Activated CD8-positive, alpha-beta T cell treated with anti-CD3 and anti-CD28 coated beads, Interleukin-2, amount 10 ng/mL, durations not matched to agents 7 days and 5 days (primary cell): ENCODE measurements at regions of chr5 and their contacts with region 1.

Region 1: DNA sequence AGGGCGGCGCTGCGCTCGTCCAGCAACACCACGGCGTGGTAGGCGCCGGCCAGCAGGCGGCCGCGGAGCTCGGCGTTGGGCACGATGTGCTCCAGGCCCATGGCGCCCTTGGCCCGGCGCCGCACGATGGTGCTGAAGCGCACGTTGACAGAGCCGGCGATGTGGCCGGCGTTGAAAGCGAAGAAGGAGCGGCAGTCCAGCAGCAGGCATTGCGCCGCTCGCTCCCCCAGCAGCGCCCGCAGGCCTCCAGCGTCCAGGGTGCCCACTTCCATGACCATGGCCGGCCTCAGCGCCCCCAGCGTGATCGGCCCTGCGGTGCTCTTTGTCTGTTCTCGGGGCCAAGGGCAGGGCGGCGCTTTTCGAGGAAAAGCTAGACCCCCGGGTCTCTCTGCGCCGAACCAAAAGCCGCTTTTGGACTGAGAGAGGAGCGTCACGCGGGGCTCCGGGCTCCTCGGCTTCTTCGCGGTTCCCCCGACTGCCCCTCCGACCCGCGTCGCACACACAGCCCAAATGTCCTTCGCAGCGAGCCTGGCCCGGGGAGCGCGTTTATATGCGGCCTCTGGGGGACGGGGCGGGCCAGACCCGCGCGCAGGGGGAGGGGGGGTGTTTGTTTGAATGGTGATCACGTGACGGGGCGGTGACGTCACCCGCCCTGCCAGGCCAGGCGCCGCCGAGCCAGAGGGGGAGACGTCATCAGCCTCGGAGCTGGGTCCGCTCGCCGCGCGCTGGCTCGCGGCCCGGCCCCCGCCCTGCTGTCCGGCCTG is at the start of gene DUSP1:
- DNase-seq: peak; percentile 98
- ATAC-seq: peak; percentile 68
- H3K4me3 Mint-ChIP-seq: peak within 1 kb of the TSS; percentile 90
- H3K27ac Mint-ChIP-seq: peak within 1 kb of the TSS; percentile 99
- H3K4me1 Mint-ChIP-seq: peaks cover 53% of the 10 kb centered on the region
- H3K27me3 Mint-ChIP-seq: no peaks in the 10 kb centered on the region
- total RNA-seq, gene DUSP1: 55.6 to 56.6 TPM

Region 2: DNA sequence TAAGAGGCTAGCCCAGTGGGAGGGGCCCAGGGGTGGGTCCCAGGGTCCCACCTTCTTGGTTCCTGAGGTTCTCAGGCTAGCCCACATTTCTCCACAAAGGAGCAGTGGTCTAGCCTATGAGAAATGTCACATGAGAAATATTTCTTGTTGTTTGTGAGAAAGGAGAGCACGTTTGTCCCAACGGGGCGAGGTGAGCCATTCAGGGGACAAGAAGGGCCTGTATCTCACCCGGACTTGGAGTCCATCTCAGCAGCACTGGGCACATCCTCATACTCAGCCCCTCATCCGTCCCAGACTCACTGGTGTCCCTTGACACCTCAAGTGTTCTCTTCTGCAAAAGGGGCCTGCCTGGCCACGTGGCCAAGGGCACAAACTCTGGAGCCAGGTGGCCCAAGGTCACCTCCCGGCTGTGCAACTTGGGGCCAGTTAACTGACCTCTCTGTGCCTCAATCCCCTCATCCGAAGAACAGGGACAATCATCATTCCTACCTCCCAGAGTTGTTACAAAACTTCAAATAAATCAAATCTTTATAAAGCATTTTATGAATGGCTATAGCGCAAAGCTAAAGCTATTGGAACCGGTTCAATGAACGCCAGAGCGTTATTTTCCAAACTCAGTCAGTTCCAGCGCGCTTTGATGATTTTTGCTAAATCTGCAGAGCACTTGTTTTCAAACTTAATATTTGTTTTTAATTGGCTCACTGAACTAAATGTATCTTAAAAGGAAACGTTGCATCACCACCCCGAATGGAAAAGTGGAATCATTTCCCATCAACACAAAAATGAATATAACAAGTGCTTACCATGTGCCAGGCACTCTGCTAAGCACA is 49.3 kb before region 1 on chr5:
- CTCF ChIA-PET with region 1: interaction called, 24 read pairs
- POLR2A ChIA-PET with region 1: interaction called, 8 read pairs
- DNase-seq: no peak
- ATAC-seq: no peak
- H3K4me3 Mint-ChIP-seq: no peak overlapping the region
- H3K27ac Mint-ChIP-seq: no peak overlapping the region
- H3K4me1 Mint-ChIP-seq: peaks cover 15% of the 10 kb centered on the region
- H3K27me3 Mint-ChIP-seq: peaks cover 2% of the 10 kb centered on the region

Region 3: DNA sequence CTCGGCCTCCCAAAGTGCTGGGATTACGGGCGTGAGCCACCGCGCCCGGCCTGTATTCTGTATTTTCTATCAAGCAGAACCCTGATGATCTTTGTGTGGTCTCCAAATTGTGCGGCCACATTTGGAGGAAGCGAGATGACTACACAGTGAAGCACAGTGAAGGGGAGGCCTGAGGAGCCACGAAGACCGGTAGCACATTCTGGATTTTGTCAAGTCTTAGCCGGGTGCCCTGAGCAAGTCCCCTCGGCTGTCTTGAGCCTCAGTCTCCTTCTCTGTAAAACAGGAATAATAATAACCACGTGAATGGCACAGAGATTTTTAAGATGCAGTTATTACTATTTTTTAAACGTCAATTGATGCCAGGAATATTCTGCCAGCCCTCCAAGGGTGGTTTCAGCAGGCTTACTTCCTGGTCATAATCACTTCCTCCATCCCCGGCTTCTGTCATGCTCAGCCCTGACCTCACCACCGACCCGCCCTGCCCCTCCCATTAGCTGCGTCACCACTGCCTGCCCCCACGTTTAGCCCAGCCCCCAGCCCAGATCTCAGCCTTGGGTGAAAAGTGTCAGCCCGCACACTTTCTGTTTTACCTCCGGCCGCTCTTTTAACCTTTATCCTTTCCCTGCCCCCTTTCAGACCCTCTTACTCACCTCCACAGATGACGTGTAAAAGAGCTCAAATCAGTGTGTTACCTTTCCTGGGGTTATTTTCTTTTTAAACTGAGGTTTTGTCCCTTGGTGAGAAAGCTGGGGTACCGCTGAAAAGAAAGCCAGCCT is 36.2 kb after region 1 on chr5:
- CTCF ChIA-PET with region 1: interaction called, 10 read pairs
- POLR2A ChIA-PET with region 1: interaction called, 17 read pairs
- DNase-seq: peak; percentile 94
- ATAC-seq: peak; percentile 96
- H3K4me3 Mint-ChIP-seq: peak overlapping the region; percentile 66
- H3K27ac Mint-ChIP-seq: peak overlapping the region; percentile 88
- H3K4me1 Mint-ChIP-seq: peaks cover 18% of the 10 kb centered on the region
- H3K27me3 Mint-ChIP-seq: no peaks in the 10 kb centered on the region

Region 4: DNA sequence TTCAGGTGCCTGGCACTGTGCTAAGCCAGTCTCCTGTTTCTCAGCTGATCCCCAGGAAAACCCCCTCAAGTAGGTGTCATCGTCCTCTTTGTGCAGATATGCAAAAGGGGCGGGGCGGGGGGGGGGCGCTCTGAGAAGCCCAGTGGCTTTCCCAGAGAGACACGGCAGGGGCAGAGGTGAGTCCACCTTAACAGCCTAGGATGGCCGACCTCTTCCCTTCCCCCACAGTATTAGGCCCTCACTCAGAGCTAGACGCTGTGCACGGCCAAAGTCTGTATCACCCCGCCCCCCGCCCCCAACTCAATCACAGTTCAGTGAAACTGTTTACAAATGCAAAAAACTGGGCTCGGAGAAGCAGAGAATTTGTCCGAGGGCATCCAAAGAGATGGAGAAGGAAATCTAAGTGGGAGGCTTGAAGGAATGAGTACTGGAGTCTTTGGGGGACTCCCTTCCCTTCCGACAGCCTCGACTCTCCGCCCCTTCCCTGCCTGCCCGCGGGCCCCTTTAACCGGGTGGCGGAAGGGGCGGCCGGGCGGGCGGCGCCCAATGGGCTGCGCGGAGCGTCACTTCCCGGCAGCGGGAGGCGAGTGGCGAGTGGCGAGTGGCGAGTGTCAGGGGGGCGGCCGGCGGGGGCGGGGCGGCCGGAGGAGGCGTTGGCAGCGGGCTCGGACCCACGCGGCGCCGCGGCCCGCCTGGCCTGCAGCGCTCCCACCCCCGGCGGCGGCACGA is 63.0 kb after region 1 on chr5 and contains the start of gene ERGIC1:
- CTCF ChIA-PET with region 1: interaction called, 25 read pairs
- POLR2A ChIA-PET with region 1: interaction called, 25 read pairs
- DNase-seq: peak; percentile 79
- ATAC-seq: peak; percentile 93
- H3K4me3 Mint-ChIP-seq: peak within 1 kb of the TSS; percentile 79
- H3K27ac Mint-ChIP-seq: peak within 1 kb of the TSS; percentile 75
- H3K4me1 Mint-ChIP-seq: peaks cover 42% of the 10 kb centered on the region
- H3K27me3 Mint-ChIP-seq: no peaks in the 10 kb centered on the region
- total RNA-seq, gene ERGIC1: 50.4 to 52.7 TPM

Region 5: DNA sequence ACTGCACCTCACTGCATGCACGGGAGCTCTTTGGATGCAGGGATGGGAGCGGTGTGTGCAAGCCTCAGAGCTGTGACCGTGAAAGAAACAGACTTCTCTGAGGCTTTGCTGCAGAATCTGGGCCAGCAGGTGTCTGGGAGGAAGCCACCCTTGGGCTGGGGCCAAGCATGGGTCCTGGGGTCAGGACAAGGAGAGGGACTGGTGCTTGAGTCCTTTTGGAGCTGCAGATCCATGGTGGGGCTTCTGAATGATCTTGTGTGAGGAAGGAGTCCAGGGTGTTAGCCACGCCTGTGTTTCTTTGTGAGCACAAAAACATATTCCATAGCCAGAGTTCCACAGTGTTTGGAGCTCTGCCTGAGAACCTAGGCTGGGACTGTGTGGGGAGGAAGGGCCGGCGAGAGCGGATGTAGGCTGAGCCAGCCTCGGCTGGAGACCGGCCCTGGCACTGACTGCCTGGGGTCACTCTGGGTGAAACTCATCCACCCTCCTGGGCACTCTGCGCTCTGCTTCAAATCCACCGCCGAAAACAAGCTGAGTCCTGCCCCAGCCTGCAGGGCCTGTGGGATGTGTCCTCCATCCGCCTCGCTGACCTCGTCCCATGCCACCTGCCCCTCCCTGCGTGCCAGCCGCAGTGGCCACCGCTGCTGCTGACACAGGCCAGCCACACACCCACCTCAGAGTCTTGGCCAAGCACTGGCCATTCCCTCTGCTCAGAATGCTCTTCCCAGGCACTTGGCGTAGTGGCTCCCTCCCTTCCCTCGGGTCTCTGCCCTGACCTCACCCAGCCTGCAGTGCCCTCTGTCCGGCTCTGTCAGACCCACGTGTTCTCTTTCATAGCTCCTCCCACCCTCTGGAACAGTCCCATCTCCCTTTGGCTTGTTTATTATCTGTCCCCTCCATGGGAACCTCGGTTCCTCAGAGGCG is 89.9 kb after region 1 on chr5:
- CTCF ChIA-PET with region 1: no interaction called
- POLR2A ChIA-PET with region 1: no interaction called
- DNase-seq: no peak
- ATAC-seq: no peak
- H3K4me3 Mint-ChIP-seq: no peak overlapping the region
- H3K27ac Mint-ChIP-seq: no peak overlapping the region
- H3K4me1 Mint-ChIP-seq: peaks cover 11% of the 10 kb centered on the region
- H3K27me3 Mint-ChIP-seq: no peaks in the 10 kb centered on the region

Region 6: GRCh38 chr5:172932313-172933017 is 161.6 kb after region 1 on chr5:
- CTCF ChIA-PET with region 1: interaction called, 37 read pairs
- POLR2A ChIA-PET with region 1: interaction called, 4 read pairs
- DNase-seq: peak; percentile 76
- ATAC-seq: peak; percentile 93
- H3K4me3 Mint-ChIP-seq: no peak overlapping the region
- H3K27ac Mint-ChIP-seq: peak overlapping the region; percentile 45
- H3K4me1 Mint-ChIP-seq: peaks cover 1% of the 10 kb centered on the region
- H3K27me3 Mint-ChIP-seq: no peaks in the 10 kb centered on the region